ENCODE measurements at regions of chr2 and their contacts with region 1.

Region 1: DNA sequence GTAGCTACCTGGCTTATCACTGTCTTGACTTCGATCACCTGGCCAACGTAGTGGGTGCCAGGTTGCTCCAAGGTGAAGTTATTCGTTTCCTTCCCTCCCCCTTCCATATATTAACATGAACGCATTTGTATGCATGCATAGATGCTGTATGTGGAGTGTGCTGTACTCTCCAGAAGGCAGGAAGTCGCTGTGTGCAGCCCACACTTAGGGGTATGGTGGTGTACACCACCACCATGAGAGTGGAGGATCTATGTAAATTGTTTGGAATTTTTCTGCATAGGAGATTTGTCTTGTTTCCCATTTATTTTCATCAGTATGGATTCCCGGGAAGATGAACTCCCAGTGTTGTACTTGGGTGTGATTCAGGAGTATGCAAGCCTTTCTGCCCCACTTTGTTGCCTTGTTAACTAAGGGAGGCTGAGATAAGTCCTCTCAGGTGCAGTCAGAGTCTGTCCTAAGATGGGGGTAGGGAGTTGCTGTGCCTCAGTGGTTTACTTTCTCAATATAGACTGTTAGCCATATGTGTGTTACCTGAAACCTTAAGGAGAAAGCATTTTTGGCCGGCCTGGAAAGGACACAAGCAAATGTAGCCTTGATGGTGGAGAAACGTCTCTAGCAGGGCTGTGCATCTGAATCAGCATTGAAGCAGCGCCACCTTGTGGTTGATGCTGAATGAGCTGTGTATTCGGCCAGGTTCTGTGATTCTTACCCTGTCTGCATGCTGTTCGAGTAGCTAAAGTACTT is 149.8 kb downstream of the TANC1 start:
- DNase-seq: peak; percentile 54 to 63 (median 62)
- H3K4me3 ChIP-seq: no peak overlapping the region
- H3K4me3 Mint-ChIP-seq: no peak overlapping the region
- H3K27ac ChIP-seq: no peak overlapping the region
- H3K27ac Mint-ChIP-seq: no peak overlapping the region
- H3K4me1 ChIP-seq: no peaks in the 10 kb centered on the region
- H3K4me1 Mint-ChIP-seq: peaks cover 0 to 8% (median 5%) of the 10 kb centered on the region in 4 donors
- H3K27me3 ChIP-seq: peaks cover 5% of the 10 kb centered on the region
- H3K27me3 Mint-ChIP-seq: peaks cover 0 to 3% of the 10 kb centered on the region in 2 donors

Region 2: DNA sequence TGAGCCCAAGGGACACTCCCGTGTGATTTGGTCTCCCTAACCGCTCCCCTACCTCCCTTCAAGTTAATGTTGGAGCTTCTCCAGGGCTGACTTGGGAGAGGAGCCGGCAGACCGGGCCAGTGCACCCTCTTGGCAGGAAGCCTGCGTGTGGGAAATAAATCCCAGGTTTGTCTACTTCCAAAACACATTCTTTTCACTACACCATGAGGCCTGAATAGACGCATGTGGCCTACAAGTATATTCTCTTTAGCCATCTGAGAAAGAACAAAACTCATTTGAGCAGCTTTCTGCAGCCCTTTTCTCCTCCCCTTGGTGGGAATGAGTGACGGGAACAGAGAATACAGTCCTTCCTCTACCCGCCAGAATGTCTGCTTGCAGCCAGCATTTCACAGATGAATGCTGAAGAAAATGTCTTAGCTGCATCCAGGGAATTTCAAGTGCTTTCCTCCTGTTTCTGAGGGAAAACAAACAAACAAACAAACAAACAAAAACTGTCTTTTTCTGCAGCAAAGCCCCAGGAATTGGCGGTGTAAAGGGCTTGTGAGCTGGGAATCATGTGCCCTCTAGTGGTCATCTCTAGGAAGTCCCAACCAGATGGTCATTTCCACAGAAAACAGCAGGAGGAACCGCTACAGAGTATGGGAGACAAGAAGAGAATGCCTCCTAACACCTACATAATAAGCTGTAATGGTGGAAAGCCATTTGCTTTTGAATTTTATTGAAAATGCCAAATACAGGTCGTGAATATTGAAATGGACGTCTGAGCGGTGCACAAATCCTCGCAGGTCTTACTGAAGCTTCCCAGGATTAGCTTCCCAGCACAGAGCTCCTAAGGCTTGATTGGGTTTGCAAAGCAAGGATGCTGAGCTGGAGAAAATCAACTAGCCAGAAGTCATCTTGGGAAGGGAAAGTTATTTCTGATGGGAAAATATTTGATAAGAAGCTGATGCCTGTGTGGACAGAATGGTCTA is 364.4 kb before region 1 on chr2:
- CTCF ChIA-PET with region 1: no interaction called
- POLR2A ChIA-PET with region 1: no interaction called
- intact Hi-C with region 1: loop called (anchors 1 kb)
- DNase-seq: peak in 4 of 5 donors; percentile 31 to 43 (median 36)
- H3K4me3 ChIP-seq: no peak overlapping the region
- H3K4me3 Mint-ChIP-seq: no peak overlapping the region
- H3K27ac ChIP-seq: no peak overlapping the region
- H3K27ac Mint-ChIP-seq: no peak overlapping the region
- H3K4me1 ChIP-seq: no peaks in the 10 kb centered on the region
- H3K4me1 Mint-ChIP-seq: no peaks in the 10 kb centered on the region
- H3K27me3 ChIP-seq: no peaks in the 10 kb centered on the region
- H3K27me3 Mint-ChIP-seq: peaks cover 16 to 24% of the 10 kb centered on the region in 2 donors

Region 3: GRCh38 chr2:159035790-159036411 is 82.4 kb before region 1 on chr2:
- CTCF ChIA-PET with region 1: interaction called, 35 read pairs
- POLR2A ChIA-PET with region 1: no interaction called
- intact Hi-C with region 1: no loop called
- DNase-seq: peak in 3 of 5 donors; percentile 12 to 20 (median 18)
- H3K4me3 ChIP-seq: no peak overlapping the region
- H3K4me3 Mint-ChIP-seq: no peak overlapping the region
- H3K27ac ChIP-seq: no peak overlapping the region
- H3K27ac Mint-ChIP-seq: no peak overlapping the region
- H3K4me1 ChIP-seq: no peaks in the 10 kb centered on the region
- H3K4me1 Mint-ChIP-seq: no peaks in the 10 kb centered on the region
- H3K27me3 ChIP-seq: no peaks in the 10 kb centered on the region
- H3K27me3 Mint-ChIP-seq: peaks cover 1 to 4% of the 10 kb centered on the region in 2 donors

Region 4: DNA sequence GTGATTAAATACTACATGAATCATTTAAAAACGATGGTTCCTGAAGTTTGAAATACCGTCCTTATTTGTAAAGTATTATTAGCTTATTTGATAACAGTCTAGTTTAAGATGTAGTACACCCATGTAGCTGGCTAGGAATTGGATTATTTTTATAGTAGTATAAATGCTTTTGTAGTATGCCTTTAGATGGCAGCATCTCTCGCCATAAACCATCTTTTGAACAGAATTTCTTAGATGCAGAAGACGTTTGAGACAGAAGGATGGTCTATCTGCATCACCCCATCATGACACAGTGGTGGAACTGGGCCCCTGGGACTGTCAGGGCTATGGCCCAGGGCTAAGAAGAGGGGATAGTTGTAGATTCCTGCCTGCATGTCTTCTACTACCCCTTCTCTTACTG is 15.5 kb after region 1 on chr2:
- CTCF ChIA-PET with region 1: interaction called, 41 read pairs
- POLR2A ChIA-PET with region 1: no interaction called
- intact Hi-C with region 1: no loop called
- DNase-seq: peak in 1 of 5 donors; percentile 9
- H3K4me3 ChIP-seq: no peak overlapping the region
- H3K4me3 Mint-ChIP-seq: no peak overlapping the region
- H3K27ac ChIP-seq: no peak overlapping the region
- H3K27ac Mint-ChIP-seq: no peak overlapping the region
- H3K4me1 ChIP-seq: no peaks in the 10 kb centered on the region
- H3K4me1 Mint-ChIP-seq: peaks cover 0 to 1% (median 0%) of the 10 kb centered on the region in 4 donors
- H3K27me3 ChIP-seq: no peaks in the 10 kb centered on the region
- H3K27me3 Mint-ChIP-seq: peaks cover 0 to 2% of the 10 kb centered on the region in 2 donors

Region 5: DNA sequence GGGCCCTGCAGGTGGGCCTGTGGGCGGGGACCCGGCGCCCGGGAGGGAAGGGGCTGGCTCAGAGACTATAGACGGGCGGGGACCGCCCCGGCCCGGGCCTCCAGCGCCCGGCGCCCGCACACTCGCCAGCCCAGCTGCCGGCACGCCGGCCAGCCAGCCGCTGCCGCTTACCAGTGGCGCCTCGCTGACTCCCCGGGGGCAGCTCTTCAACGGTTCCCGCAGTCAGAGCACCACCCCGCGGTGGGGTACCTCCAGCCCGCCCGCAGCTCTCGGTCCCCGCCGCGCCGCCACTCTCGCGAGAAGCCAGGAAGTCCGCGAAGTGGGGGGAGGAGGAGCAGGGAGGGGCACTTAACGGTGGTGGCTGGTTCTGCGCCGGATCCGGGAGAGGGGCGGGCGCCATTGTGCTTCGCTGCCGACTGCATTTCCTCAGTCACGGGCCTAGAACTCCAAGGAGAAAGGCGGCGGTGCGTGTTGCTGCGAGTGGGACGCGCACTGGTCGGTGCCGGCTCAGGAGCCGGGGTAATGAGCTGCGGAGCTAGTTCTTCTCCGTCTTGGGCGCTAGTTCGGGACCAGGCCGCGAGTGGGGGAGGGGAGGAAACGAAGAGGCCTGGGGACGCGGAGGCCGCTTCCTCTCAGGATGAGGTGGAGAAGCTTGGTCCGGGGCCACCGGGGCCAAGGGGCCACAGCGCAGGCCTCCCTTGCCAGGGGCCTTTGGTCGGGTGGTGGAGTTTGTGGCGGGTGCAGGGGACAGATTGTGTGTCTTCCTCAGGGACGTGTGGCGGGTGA is 594.0 kb after region 1 on chr2 and contains the start of gene MARCHF7:
- CTCF ChIA-PET with region 1: no interaction called
- POLR2A ChIA-PET with region 1: no interaction called
- intact Hi-C with region 1: loop called (anchors 1 kb)
- DNase-seq: peak; percentile 97 to 100 (median 98)
- H3K4me3 ChIP-seq: peak within 1 kb of the TSS; percentile 88 to 98
- H3K4me3 Mint-ChIP-seq: peak within 1 kb of the TSS; percentile 97 to 100 (median 99)
- H3K27ac ChIP-seq: peak within 1 kb of the TSS; percentile 92
- H3K27ac Mint-ChIP-seq: peak within 1 kb of the TSS; percentile 90 to 100 (median 100)
- H3K4me1 ChIP-seq: peaks cover 53% of the 10 kb centered on the region
- H3K4me1 Mint-ChIP-seq: peaks cover 36 to 63% (median 49%) of the 10 kb centered on the region in 4 donors
- H3K27me3 ChIP-seq: no peaks in the 10 kb centered on the region
- H3K27me3 Mint-ChIP-seq: no peaks in the 10 kb centered on the region
- total RNA-seq, gene MARCHF7: 113 to 115 TPM

Measured in CD4-positive, alpha-beta memory T cell (primary cell).